Activated B cell treated with CpG ODN at 0.5 μM for 24 hours (primary cell): ENCODE measurements at regions of chr4 and their contacts with region 1.

Region 1: DNA sequence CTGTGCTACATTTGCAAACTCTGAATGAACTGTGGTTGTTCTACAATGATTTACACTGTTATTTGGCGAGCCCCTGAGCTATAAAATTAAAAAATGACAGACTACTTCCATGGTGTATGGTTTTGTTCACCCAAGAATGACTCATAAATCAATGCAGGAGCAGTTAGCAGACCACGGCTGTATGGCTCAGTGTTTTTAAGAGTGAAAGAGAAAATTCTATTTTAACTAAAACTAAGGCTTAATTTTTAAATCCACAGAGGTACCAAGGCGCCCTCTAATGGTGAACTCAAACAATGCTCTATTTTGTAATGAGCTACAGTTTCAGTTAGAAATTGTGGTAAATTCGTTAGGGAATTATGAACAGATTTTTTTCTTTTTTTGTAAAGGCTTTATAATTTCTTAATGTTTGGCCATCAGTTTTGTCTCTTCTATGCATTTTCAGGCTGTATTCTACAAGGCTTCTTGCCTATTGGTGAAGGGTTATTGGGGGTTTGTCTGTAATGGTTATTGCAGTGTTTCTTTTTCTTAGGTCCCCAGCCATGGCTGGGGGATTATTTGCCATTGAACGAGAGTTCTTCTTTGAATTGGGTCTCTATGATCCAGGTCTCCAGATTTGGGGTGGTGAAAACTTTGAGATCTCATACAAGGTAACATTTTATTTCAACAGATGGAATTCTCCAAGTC is 32.5 kb downstream of the HMGB2 start:
- DNase-seq: no peak
- ATAC-seq: peak; percentile 40
- H3K4me3 Mint-ChIP-seq: no peak overlapping the region
- H3K27ac Mint-ChIP-seq: no peak overlapping the region
- H3K4me1 Mint-ChIP-seq: peaks cover 7% of the 10 kb centered on the region
- H3K27me3 Mint-ChIP-seq: no peaks in the 10 kb centered on the region
- CTCF ChIP-seq: no peak

Region 2: DNA sequence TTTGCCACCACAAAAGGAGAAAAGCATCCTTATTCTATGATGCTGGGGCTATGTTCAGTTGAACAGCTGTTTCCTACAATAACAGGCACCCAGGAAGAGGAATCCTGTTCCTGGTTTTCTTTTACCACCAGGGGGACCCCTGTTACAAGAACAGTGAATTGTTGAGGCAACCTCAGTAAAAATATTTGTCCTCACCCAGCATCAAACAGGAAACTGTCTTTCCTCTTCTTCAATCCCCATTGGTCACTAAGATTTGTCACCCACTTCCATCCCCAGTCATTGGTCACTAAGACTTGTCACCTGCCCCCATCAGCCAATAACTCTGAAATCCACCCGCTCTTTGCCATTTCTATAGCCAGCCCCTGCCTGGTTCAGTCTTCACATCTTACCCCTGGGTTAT is 276.5 kb before region 1 on chr4:
- CTCF ChIA-PET with region 1: interaction called, 10 read pairs
- POLR2A ChIA-PET with region 1: interaction called, 3 read pairs
- intact Hi-C with region 1: loop called (anchors 1 kb)
- DNase-seq: no peak
- ATAC-seq: no peak
- H3K4me3 Mint-ChIP-seq: no peak overlapping the region
- H3K27ac Mint-ChIP-seq: no peak overlapping the region
- H3K4me1 Mint-ChIP-seq: peaks cover 3% of the 10 kb centered on the region
- H3K27me3 Mint-ChIP-seq: no peaks in the 10 kb centered on the region
- CTCF ChIP-seq: no peak